ENCODE measurements at regions of chr10 and their contacts with region 1.

Region 1: GRCh38 chr10:90857635-90858460 is at the start of gene HTR7:
- DNase-seq: peak; percentile 55 to 87 (median 84)
- ATAC-seq: peak; percentile 91 to 93
- H3K4me3 ChIP-seq: peak within 1 kb of the TSS; percentile 90
- H3K27ac ChIP-seq: peak within 1 kb of the TSS; percentile 4
- H3K4me1 ChIP-seq: no peaks in the 10 kb centered on the region
- H3K27me3 ChIP-seq: peaks cover 2% of the 10 kb centered on the region
- total RNA-seq, gene HTR7: 0.14 to 0.58 (median 0.23) TPM

Region 2: GRCh38 chr10:90652519-90652918 is 205.3 kb before region 1 on chr10:
- intact Hi-C with region 1: no loop called
- DNase-seq: no peak
- ATAC-seq: no peak
- H3K4me3 ChIP-seq: no peak overlapping the region
- H3K27ac ChIP-seq: no peak overlapping the region
- H3K4me1 ChIP-seq: no peaks in the 10 kb centered on the region
- H3K27me3 ChIP-seq: no peaks in the 10 kb centered on the region

Region 3: GRCh38 chr10:90751107-90751997 is 106.5 kb before region 1 on chr10:
- intact Hi-C with region 1: loop called in 3 of 4 experiments (anchors 5 to 10 kb)
- DNase-seq: no peak
- ATAC-seq: peak in 1 of 2 donors; percentile 53
- H3K4me3 ChIP-seq: no peak overlapping the region
- H3K27ac ChIP-seq: no peak overlapping the region
- H3K4me1 ChIP-seq: no peaks in the 10 kb centered on the region
- H3K27me3 ChIP-seq: no peaks in the 10 kb centered on the region

Region 4: GRCh38 chr10:90769946-90770841 is 87.7 kb before region 1 on chr10:
- intact Hi-C with region 1: loop called in 1 of 4 experiments (anchors 10 kb)
- DNase-seq: peak in 1 of 3 donors; percentile 42
- ATAC-seq: peak; percentile 20 to 50
- H3K4me3 ChIP-seq: no peak overlapping the region
- H3K27ac ChIP-seq: no peak overlapping the region
- H3K4me1 ChIP-seq: no peaks in the 10 kb centered on the region
- H3K27me3 ChIP-seq: no peaks in the 10 kb centered on the region

Region 5: GRCh38 chr10:90969947-90970684 is 112.3 kb after region 1 on chr10:
- intact Hi-C with region 1: no loop called
- DNase-seq: no peak
- ATAC-seq: peak; percentile 48 to 50
- H3K4me3 ChIP-seq: peak overlapping the region; percentile 64
- H3K27ac ChIP-seq: peak overlapping the region; percentile 51
- H3K4me1 ChIP-seq: no peaks in the 10 kb centered on the region
- H3K27me3 ChIP-seq: no peaks in the 10 kb centered on the region